Heart left ventricle (tissue), 16 donors: ENCODE measurements at regions of chr7 and their contacts with region 1.

Region 1: DNA sequence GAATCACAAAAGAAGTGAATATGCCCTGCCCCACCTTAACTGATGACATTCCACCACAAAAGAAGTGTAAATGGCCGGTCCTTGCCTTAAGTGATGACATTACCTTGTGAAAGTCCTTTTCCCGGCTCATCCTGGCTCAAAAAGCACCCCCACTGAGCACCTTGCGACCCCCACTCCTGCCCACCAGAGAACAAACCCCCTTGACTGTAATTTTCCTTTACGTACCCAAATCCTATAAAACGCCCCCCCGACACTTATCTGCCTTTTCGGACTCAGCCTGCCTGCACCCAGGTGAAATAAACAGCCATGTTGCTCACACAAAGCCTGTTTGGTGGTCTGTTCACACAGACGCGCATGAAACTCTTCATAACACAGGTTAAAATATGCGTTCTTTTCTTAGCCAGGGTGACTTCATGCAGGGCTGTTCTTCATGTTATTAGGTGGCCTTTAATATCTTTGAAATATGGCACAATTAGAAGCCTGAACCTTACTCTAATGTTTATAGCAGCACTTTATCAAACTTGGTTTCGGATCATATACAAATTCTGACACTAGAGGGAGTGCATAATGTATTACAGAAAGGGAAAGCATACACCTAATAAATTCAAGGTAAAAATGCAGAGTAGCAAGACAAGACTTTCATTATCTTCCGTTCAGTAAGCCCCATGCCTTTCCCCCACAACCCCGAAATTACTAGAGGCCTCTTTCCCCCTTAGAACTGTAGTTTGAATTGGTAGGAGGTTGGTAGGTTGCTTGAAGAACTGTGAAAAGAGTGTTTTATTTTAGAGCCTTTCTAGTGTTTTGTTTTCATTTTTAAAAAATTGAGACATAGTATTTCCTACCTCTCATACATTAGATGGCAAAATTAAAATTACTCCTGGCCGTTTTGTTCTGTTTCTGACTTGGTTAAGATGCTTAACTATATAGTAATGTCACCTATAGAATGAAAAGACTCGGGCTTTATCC is 117.9 kb downstream of the NPY start:
- DNase-seq: no peak
- ATAC-seq: no peak
- H3K4me3 ChIP-seq: peak overlapping the region in 1 of 12 donors; percentile 1
- H3K27ac ChIP-seq: no peak overlapping the region
- H3K4me1 ChIP-seq: no peaks in the 10 kb centered on the region
- H3K27me3 ChIP-seq: peaks cover 0 to 3% (median 0%) of the 10 kb centered on the region in 9 donors
- CTCF ChIP-seq: peak in 10 of 12 donors; percentile 17 to 53 (median 34)
- POLR2A ChIP-seq: no peak

Region 2: DNA sequence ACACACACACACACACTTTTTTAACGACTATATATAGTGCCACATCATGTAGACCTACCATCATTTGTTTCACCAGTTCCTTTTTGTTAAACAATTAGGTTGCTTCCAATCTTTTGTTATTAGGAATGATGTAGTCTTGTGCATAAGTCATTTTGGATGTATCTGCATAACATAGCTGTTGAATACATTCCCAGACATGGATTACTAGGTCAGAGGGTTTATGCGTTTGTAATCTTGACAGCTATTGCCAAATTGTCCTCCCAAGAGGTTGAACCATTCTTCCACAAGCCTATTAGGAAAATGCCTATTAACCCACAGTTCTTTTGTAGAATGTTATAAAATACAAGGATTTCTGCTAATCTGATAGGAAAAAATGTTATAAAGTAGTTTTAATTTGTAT is 258.6 kb after region 1 on chr7:
- intact Hi-C with region 1: loop called in 7 of 10 experiments (anchors 5 to 10 kb)
- DNase-seq: no peak
- ATAC-seq: no peak
- H3K4me3 ChIP-seq: no peak overlapping the region
- H3K27ac ChIP-seq: no peak overlapping the region
- H3K4me1 ChIP-seq: no peaks in the 10 kb centered on the region
- H3K27me3 ChIP-seq: no peaks in the 10 kb centered on the region
- CTCF ChIP-seq: no peak
- POLR2A ChIP-seq: no peak

Region 3: GRCh38 chr7:24722386-24723177 is 320.7 kb after region 1 on chr7:
- intact Hi-C with region 1: loop called in 1 of 10 experiments (anchors 5 kb)
- DNase-seq: no peak
- ATAC-seq: peak in 2 of 4 donors; percentile 33 to 44
- H3K4me3 ChIP-seq: no peak overlapping the region
- H3K27ac ChIP-seq: no peak overlapping the region
- H3K4me1 ChIP-seq: peaks cover 0 to under 1% (median 0%) of the 10 kb centered on the region in 12 donors
- H3K27me3 ChIP-seq: no peaks in the 10 kb centered on the region
- CTCF ChIP-seq: peak in 7 of 12 donors; percentile 13 to 41 (median 29)
- POLR2A ChIP-seq: no peak